ENCODE measurements at regions of chr3 and their contacts with region 1.

Region 1: DNA sequence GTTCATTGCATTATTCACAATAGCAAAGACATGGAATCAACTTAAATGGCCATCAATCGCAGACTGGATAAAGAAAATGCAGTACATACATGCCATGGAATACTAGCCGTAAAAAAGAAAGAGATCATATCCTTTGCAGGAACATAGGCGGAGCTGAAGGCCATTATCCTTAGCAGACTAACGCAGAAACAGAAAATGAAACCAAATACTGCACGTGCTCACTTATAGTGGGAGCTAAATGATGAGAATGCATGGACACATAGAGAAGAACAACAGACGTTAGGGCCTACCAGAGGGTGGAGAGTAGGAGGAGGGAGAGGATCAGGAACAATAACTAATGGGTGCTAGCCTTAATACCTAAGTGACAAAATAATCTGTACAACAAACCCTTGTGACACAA is 57.9 kb downstream of the RASA2 start:
- DNase-seq: no peak
- ATAC-seq: peak in 2 of 4 donors; percentile 49 to 71
- H3K4me3 ChIP-seq: no peak overlapping the region
- H3K27ac ChIP-seq: peak overlapping the region in 1 of 12 donors; percentile 50
- H3K4me1 ChIP-seq: peaks cover 0 to 17% (median 0%) of the 10 kb centered on the region in 12 donors
- H3K27me3 ChIP-seq: no peaks in the 10 kb centered on the region
- CTCF ChIP-seq: no peak
- POLR2A ChIP-seq: no peak

Region 2: DNA sequence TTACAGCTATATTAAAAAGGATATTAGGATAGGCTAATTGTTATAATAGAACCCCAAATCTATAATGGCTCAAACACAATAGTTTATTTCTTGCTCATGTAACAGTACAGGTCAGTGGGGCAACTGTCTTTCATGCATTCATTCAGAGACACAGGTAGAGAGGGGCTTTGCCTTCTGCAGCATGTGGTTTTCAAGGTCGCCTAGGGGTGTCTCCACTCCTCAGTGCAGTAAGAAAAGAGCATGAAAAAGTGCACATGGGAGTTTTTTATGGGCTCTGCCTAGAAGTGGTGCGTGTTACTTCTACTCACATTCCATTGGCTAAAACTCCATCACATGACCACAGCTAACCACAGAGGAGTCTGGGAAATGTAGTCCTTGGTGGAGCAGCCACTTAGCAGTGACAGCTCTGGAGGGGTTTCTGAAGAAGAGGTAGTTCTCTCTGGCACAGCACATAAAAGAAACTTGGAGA is 174.6 kb before region 1 on chr3:
- intact Hi-C with region 1: no loop called
- DNase-seq: peak in 4 of 5 donors; percentile 31 to 71 (median 52)
- ATAC-seq: peak; percentile 58 to 72 (median 67)
- H3K4me3 ChIP-seq: peak overlapping the region in 9 of 12 donors; percentile 2 to 54 (median 45)
- H3K27ac ChIP-seq: peak overlapping the region; percentile 31 to 97 (median 94)
- H3K4me1 ChIP-seq: peaks cover 12 to 65% (median 42%) of the 10 kb centered on the region in 12 donors
- H3K27me3 ChIP-seq: no peaks in the 10 kb centered on the region
- CTCF ChIP-seq: peak in 9 of 12 donors; percentile 24 to 61 (median 29)
- POLR2A ChIP-seq: peak in 1 of 2 donors; percentile 13

Region 3: DNA sequence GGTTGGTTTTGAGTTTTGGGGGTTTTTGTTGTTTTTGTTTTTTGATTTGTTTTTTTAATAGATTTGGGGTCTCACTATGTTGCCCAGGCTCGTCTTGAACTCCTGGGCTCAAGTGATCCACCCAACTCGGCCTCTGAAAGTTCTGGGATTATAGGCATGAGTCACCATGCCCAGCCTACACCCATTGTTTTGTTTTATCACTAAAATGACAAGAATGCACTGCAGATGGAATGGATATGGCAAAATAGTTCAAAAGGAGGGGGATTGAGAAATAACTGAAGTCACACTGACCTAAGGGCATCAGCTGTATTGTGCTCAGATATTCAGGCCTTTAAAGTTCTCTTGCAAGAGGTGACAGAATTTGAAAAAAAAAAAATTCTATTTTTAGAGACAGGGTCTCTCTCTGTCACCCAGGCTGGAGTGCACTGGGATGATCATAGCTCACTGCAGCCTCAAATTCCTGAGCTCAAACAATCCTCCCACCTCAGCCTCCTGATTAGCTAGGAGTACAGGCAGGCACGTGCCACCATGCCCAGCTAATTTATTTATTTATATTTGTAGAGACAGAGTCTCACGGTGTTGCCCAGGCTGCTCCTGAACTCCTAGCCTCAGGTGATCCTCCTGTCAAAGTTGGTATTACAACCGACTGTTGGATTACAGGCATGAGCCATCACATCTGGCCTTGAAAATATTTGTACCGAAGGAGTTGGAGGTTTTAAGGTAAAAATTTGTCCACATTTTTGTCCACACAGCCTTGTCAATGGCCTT is 62.3 kb before region 1 on chr3:
- intact Hi-C with region 1: loop called in 3 of 10 experiments (anchors 5 kb)
- DNase-seq: no peak
- ATAC-seq: no peak
- H3K4me3 ChIP-seq: no peak overlapping the region
- H3K27ac ChIP-seq: peak overlapping the region in 1 of 12 donors; percentile 86
- H3K4me1 ChIP-seq: peaks cover 0 to 38% (median 6%) of the 10 kb centered on the region in 12 donors
- H3K27me3 ChIP-seq: no peaks in the 10 kb centered on the region
- CTCF ChIP-seq: no peak
- POLR2A ChIP-seq: no peak

Region 4: DNA sequence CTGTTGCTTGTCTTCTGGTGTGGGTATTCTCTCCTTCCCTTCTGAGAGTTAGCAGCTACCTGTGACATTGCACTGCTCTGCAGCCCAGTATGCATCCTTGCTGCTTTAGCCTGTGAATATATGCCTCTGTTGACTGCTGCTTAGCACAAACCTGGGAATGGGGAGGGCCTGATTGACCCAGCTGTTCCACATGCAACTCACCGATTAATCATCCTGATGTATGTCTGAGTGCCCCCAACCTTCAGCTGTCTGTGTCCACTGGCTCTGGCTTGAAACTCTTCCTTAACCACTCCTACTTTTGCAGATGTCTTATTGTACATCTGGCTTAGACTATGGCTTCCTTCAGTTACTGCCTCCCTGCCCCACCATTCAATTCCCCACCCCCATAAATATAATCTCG is 61.2 kb after region 1 on chr3:
- intact Hi-C with region 1: no loop called
- DNase-seq: no peak
- ATAC-seq: no peak
- H3K4me3 ChIP-seq: no peak overlapping the region
- H3K27ac ChIP-seq: no peak overlapping the region
- H3K4me1 ChIP-seq: peaks cover 0 to 18% (median 8%) of the 10 kb centered on the region in 12 donors
- H3K27me3 ChIP-seq: no peaks in the 10 kb centered on the region
- CTCF ChIP-seq: no peak
- POLR2A ChIP-seq: no peak

Measured in heart left ventricle (tissue), 16 donors.